ENCODE measurements at regions of chr20 and their contacts with region 1.

Region 1: GRCh38 chr20:18507218-18508021 is at the start of gene SEC23B:
- DNase-seq: peak; percentile 97 to 98
- H3K4me3 ChIP-seq: peak within 1 kb of the TSS; percentile 61
- H3K27ac ChIP-seq: peak within 1 kb of the TSS; percentile 92
- H3K4me1 ChIP-seq: peaks cover 18% of the 10 kb centered on the region
- H3K27me3 ChIP-seq: no peaks in the 10 kb centered on the region
- CTCF ChIP-seq: no peak
- total RNA-seq, gene SEC23B: 60.3 and 78.5 TPM in 2 replicates

Region 2: DNA sequence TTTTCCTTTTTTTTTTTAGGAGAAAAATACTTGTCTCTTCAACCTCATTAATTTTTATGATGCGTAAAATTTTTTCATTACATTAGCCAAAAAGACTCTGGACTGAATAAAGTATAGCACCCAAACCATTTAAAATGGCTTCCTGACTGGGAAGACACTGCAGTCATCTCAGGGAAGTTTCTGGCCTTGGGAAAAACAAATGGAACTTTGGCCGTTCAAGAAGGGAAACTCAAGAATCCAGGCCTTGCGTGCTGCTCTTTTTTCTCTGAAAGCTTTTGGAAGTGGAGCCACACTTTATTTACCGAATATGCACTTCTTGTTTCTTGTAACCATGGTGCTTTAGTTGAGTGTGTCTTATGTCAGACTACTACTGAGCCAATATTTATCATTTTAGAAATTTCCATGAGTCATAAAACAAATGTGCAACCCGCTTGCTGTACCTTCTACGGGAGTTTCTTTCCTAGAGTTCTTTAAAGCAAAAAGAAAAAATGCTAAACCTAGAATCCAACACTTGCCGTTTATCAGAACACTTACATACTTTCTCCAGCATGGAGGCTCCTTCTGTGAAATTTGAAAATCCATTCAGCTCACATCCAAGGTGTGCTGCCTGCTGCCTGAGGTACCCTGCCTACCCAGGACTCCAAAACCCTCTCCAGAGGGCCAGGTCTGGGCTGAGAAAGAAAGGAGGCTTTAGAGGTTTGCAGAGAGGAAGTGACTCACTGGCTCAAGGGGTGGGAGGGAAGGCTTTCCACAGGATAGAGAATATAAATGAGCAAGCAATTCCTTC is 949.1 kb before region 1 on chr20:
- CTCF ChIA-PET with region 1: no interaction called
- POLR2A ChIA-PET with region 1: interaction called, 14 read pairs
- intact Hi-C with region 1: no loop called
- DNase-seq: peak; percentile 74 to 90
- H3K4me3 ChIP-seq: peak overlapping the region; percentile 51
- H3K27ac ChIP-seq: peak overlapping the region; percentile 92
- H3K4me1 ChIP-seq: peaks cover 82% of the 10 kb centered on the region
- H3K27me3 ChIP-seq: no peaks in the 10 kb centered on the region
- CTCF ChIP-seq: no peak

Region 3: GRCh38 chr20:17674722-17675524 is 832.5 kb before region 1 on chr20:
- CTCF ChIA-PET with region 1: no interaction called
- POLR2A ChIA-PET with region 1: no interaction called
- intact Hi-C with region 1: no loop called
- DNase-seq: no peak
- H3K4me3 ChIP-seq: no peak overlapping the region
- H3K27ac ChIP-seq: no peak overlapping the region
- H3K4me1 ChIP-seq: peaks cover 13% of the 10 kb centered on the region
- H3K27me3 ChIP-seq: no peaks in the 10 kb centered on the region
- CTCF ChIP-seq: no peak

Region 4: GRCh38 chr20:18287915-18288748 is 219.3 kb before region 1 on chr20 and contains the start of gene ZNF133:
- CTCF ChIA-PET with region 1: no interaction called
- POLR2A ChIA-PET with region 1: interaction called, 6 read pairs
- intact Hi-C with region 1: loop called (anchors 1 kb)
- DNase-seq: peak; percentile 93 to 98
- H3K4me3 ChIP-seq: peak within 1 kb of the TSS; percentile 87
- H3K27ac ChIP-seq: peak within 1 kb of the TSS; percentile 92
- H3K4me1 ChIP-seq: peaks cover 18% of the 10 kb centered on the region
- H3K27me3 ChIP-seq: no peaks in the 10 kb centered on the region
- CTCF ChIP-seq: no peak
- total RNA-seq, gene ZNF133: 16.3 and 22.8 TPM in 2 replicates

Region 5: GRCh38 chr20:18466894-18467730 is 40.3 kb before region 1 on chr20 and contains the starts of genes DZANK1 and POLR3F:
- CTCF ChIA-PET with region 1: no interaction called
- POLR2A ChIA-PET with region 1: interaction called, 17 read pairs
- intact Hi-C with region 1: loop called (anchors 1 kb)
- DNase-seq: peak; percentile 86 to 96
- H3K4me3 ChIP-seq: peak within 1 kb of the TSS; percentile 97
- H3K27ac ChIP-seq: peak within 1 kb of the TSS; percentile 52
- H3K4me1 ChIP-seq: peaks cover 16% of the 10 kb centered on the region
- H3K27me3 ChIP-seq: no peaks in the 10 kb centered on the region
- CTCF ChIP-seq: no peak
- total RNA-seq, gene DZANK1: 4.4 and 7.3 TPM in 2 replicates
- total RNA-seq, gene POLR3F: 7.4 and 9.6 TPM in 2 replicates

Region 6: DNA sequence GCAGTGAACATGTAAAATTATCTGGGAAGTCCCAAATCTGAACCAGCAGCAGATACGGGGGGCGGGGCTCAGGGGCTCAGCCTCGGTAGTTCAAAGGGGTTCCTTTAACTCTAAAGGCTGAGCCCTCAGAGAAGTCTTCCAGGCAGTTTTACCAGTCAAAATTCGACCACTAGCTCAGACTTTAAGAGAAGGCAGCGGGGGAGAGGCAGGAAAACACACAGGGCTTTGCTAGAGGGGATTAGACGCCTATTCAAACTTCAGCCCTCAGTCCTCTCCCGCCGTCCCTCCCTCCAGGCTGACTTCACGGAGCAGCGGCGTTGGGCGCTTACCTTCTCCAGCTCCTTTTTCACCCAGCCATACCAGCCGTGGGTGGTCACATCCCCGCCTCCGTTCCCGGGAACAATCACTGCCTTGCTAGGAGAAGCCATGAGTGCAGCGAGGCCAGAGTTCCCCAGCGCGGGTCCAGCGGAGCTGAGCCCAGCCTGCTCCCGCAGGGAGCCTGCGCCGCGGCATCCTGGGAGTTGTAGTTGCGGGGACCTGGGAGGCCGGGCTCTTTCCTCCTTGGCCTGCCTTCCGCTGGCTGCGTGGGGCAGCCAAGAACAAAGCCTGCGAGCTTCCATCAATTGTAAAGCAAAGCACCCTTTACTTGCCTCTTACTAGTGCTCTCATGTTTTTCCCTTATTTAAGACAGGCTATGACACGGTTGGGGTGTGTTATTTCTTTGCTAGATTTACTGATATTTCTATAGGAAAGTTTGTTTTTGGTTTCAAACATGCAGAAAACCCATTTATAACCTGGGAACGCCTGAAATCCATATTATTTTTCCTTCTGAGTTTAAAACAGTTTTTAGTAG is 10.5 kb before region 1 on chr20 and contains the start of gene RBBP9:
- CTCF ChIA-PET with region 1: interaction called, 8 read pairs
- POLR2A ChIA-PET with region 1: interaction called, 12 read pairs
- intact Hi-C with region 1: loop called (anchors 1 kb)
- DNase-seq: peak; percentile 65 to 77
- H3K4me3 ChIP-seq: peak within 1 kb of the TSS; percentile 85
- H3K27ac ChIP-seq: no peak within 1 kb of the TSS
- H3K4me1 ChIP-seq: 0 out of 2 replicates have a peak, but pooled peaks cover 10% of the 10 kb centered on the region
- H3K27me3 ChIP-seq: no peaks in the 10 kb centered on the region
- CTCF ChIP-seq: no peak
- total RNA-seq, gene RBBP9: 24.0 and 29.5 TPM in 2 replicates

Region 7: GRCh38 chr20:18524646-18525045 is 17.2 kb after region 1 on chr20:
- CTCF ChIA-PET with region 1: no interaction called
- POLR2A ChIA-PET with region 1: interaction called, 3 read pairs
- intact Hi-C with region 1: loop called (anchors 2 kb)
- DNase-seq: peak; percentile 63 to 80
- H3K4me3 ChIP-seq: no peak overlapping the region
- H3K27ac ChIP-seq: peak overlapping the region; percentile 75
- H3K4me1 ChIP-seq: peaks cover 17% of the 10 kb centered on the region
- H3K27me3 ChIP-seq: no peaks in the 10 kb centered on the region
- CTCF ChIP-seq: no peak

Region 8: GRCh38 chr20:18566892-18567742 is 59.7 kb after region 1 on chr20 and contains the start of gene SMIM26:
- CTCF ChIA-PET with region 1: no interaction called
- POLR2A ChIA-PET with region 1: interaction called, 4 read pairs
- intact Hi-C with region 1: loop called (anchors 2 kb)
- DNase-seq: peak; percentile 88 to 92
- H3K4me3 ChIP-seq: peak within 1 kb of the TSS; percentile 81
- H3K27ac ChIP-seq: peak within 1 kb of the TSS; percentile 74
- H3K4me1 ChIP-seq: 0 out of 2 replicates have a peak, but pooled peaks cover 7% of the 10 kb centered on the region
- H3K27me3 ChIP-seq: no peaks in the 10 kb centered on the region
- CTCF ChIP-seq: no peak
- total RNA-seq, gene SMIM26: 105 and 114 TPM in 2 replicates